PC-3 (cell line): ENCODE measurements at regions of chr1 and their contacts with region 1.

Region 1: GRCh38 chr1:246476771-246477170 is 30.3 kb downstream of the SMYD3 start:
- DNase-seq: no peak
- ATAC-seq: no peak
- H3K4me3 ChIP-seq: no peak overlapping the region
- H3K27ac ChIP-seq: no peak overlapping the region
- H3K4me1 ChIP-seq: no peaks in the 10 kb centered on the region
- H3K27me3 ChIP-seq: no peaks in the 10 kb centered on the region
- CTCF ChIP-seq: no peak

Region 2: DNA sequence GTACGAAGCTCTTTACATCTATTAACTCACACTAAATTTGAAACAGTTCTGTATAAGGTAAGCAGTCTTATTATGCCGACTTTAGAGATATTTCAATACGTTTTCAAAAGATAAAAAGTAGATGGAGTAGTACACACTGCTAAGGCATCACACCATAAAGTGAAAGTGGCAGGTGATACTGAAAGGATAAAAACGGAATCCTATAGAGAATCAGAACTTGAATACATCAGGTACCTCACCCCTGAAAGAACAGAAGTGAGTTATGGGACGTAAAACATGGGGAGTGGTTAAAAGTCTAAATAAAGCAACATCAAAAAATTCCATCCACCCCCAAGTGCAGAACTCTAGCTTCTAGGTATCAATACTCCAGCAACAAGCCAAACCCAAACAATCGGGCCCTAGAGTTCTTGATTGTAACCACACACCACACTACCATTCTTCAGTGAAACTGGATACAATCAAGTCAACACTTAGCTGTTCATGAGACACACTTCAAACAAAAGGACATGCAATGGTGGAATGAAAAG is 112.3 kb before region 1 on chr1:
- CTCF ChIA-PET with region 1: no interaction called
- POLR2A ChIA-PET with region 1: no interaction called
- intact Hi-C with region 1: no loop called
- DNase-seq: no peak
- ATAC-seq: no peak
- H3K4me3 ChIP-seq: no peak overlapping the region
- H3K27ac ChIP-seq: no peak overlapping the region
- H3K4me1 ChIP-seq: no peaks in the 10 kb centered on the region
- H3K27me3 ChIP-seq: no peaks in the 10 kb centered on the region
- CTCF ChIP-seq: no peak

Region 3: GRCh38 chr1:246404078-246404477 is 72.7 kb before region 1 on chr1:
- CTCF ChIA-PET with region 1: no interaction called
- POLR2A ChIA-PET with region 1: no interaction called
- intact Hi-C with region 1: no loop called
- DNase-seq: no peak
- ATAC-seq: no peak
- H3K4me3 ChIP-seq: no peak overlapping the region
- H3K27ac ChIP-seq: no peak overlapping the region
- H3K4me1 ChIP-seq: no peaks in the 10 kb centered on the region
- H3K27me3 ChIP-seq: no peaks in the 10 kb centered on the region
- CTCF ChIP-seq: no peak

Region 4: DNA sequence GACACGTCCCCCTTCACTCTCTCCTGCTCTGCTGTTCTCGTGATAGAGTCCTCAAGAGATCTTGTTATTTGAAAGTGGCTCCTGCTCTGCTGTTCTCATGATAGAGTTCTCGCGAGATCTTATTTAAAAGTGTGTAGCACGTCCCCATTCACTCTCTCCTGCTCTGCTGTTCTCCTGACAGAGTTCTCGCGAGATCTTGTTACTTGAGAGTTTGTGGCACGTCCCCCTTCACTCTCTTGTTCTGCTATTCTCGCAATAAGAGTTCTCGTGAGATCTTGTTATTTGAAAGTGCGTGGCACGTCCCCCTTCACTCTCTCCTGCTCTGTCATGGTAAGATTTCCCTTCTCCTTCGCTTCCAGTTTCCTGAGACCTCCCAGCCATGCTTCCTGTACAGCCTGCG is 17.6 kb before region 1 on chr1:
- CTCF ChIA-PET with region 1: interaction called, 3 read pairs
- POLR2A ChIA-PET with region 1: interaction called, 24 read pairs
- intact Hi-C with region 1: no loop called
- DNase-seq: no peak
- ATAC-seq: no peak
- H3K4me3 ChIP-seq: no peak overlapping the region
- H3K27ac ChIP-seq: no peak overlapping the region
- H3K4me1 ChIP-seq: no peaks in the 10 kb centered on the region
- H3K27me3 ChIP-seq: no peaks in the 10 kb centered on the region
- CTCF ChIP-seq: no peak

Region 5: DNA sequence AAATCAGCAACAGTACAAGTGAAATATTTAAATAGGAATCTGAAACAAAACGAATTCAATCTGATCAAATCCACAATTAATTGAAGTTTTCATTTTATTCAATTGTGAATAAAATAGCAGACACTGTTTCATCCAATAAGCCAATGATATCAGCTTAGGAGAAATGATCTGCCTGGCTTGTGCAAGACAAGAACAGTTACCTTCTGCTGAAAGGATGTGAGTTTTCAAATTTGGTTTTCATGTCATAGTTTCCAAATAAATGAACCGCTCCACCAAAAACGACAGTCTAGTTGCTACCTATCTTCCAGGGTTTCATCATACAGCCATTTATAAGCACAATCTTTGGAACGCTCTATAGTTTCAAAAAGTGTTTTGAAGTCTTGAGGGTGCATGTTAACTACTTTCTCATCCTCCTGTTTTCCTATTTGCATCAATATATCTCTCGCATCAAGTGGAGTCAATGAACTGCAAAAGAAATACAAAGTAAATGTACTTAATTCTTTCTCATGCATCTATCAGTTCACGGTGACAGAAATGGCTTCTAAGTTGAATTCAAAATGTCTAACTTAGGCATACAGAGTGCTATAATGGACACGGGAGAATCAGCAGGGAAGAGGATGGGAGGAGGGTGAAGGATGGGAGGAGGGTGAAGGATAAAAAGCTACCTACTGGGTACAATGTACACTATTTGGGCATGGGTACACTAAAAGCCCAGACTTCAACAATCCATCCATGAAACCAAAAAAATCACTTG is 64.1 kb after region 1 on chr1:
- CTCF ChIA-PET with region 1: no interaction called
- POLR2A ChIA-PET with region 1: no interaction called
- intact Hi-C with region 1: no loop called
- DNase-seq: no peak
- ATAC-seq: no peak
- H3K4me3 ChIP-seq: no peak overlapping the region
- H3K27ac ChIP-seq: no peak overlapping the region
- H3K4me1 ChIP-seq: no peaks in the 10 kb centered on the region
- H3K27me3 ChIP-seq: no peaks in the 10 kb centered on the region
- CTCF ChIP-seq: no peak

Region 6: DNA sequence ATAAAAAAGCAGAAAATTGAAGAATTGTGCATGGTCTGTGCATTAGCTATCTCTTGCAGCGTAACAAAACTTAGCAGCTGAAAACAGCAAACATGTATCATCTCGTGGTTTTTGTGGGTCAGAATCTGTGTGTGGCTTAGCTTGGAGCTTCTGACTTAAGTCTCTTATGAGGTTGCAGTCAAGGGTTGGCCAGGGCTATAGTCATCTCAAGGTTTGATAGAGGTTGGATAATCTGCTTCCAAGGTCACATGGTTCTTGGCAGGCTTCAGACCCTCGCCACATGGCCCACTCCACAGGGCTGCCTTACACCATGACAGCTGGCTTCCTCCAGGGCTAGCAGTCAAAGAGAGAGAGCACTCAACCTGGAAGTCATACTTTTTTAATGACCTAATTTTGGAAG is 125.4 kb after region 1 on chr1:
- CTCF ChIA-PET with region 1: no interaction called
- POLR2A ChIA-PET with region 1: no interaction called
- intact Hi-C with region 1: no loop called
- DNase-seq: no peak
- ATAC-seq: no peak
- H3K4me3 ChIP-seq: no peak overlapping the region
- H3K27ac ChIP-seq: no peak overlapping the region
- H3K4me1 ChIP-seq: peaks cover 11% of the 10 kb centered on the region
- H3K27me3 ChIP-seq: no peaks in the 10 kb centered on the region
- CTCF ChIP-seq: no peak